IMR-90 (cell line): ENCODE measurements at regions of chr13 and their contacts with region 1.

Region 1: DNA sequence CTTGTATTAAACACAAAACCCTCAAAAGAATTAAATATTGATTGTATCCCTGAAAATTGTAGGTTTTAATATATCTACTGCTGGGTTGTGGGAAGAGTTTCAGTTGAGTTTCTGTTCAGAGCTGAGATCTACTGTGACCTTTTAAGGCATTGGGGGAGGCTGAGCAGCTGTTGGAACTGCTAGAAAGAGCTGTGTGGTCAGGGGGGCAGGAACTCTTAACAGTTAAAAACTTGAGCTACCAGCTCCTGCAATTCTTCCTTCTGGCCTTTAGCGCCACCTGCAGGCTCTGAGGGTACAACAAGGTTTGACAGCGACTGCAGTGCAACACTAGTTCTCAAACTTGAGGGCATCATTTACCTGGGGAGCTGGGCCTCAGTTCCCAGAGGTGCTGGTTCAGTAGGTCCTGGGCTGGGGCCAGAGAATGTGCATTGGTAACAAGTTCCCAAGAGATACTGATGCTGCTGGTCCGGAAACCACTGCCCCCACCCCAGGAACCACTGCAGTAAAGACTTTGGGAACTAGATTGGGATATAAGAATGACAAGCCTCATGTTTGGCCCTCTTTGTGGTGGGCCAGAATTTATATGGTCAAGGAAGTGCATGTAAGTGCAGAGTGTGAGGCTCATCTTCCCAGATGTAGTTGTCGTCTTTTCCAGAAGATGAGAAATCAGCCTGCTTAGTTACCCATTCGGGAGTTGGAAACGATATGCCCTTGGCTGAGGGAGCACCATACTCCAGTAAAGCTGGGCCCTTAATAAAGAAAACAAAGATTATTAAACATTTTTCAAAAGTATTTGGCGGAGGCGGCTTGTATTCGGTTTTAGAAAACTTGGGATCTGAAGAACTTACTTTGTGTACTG is 2.6 kb downstream of the RNASEH2B start:
- DNase-seq: peak; percentile 90
- ATAC-seq: peak; percentile 34
- H3K4me3 ChIP-seq: no peak overlapping the region
- H3K27ac ChIP-seq: no peak overlapping the region
- H3K4me1 ChIP-seq: peaks cover 14% of the 10 kb centered on the region
- H3K27me3 ChIP-seq: no peaks in the 10 kb centered on the region
- CTCF ChIP-seq: peak; percentile 82
- POLR2A ChIP-seq: no peak
- RAD21 ChIP-seq: peak; percentile 81

Region 2: DNA sequence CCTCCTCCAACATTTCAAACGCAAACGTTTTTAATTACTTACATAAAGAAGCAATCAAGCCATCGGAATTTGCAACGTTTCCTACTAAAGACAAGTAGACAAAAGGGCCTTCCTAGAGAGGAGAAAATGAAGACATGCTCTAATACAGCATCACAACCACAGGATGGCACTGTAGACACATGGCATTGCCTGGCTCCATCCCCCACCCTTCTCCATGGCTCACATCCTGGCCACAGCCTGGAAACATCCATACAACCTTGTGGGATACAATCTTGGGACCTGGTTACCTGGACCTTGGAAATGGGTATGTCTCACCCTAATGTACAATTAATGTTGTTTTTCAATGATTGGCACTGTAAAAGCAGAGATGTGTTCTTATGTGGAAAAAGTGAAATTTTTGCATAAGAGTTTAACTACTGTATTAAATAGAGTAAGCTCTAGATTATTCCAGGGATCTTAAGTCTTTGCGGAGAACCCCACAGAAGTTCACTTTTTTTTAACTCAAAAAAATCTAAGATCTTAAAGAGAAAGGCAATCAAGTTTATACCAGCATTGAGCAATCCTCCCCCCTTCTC is 1242.3 kb before region 1 on chr13:
- CTCF ChIA-PET with region 1: no interaction called
- POLR2A ChIA-PET with region 1: no interaction called
- dilution Hi-C with region 1: no loop called
- in situ Hi-C with region 1: loop called (anchors 25 kb)
- intact Hi-C with region 1: loop called (anchors 5 kb)
- DNase-seq: peak; percentile 81
- ATAC-seq: peak; percentile 98
- H3K4me3 ChIP-seq: no peak overlapping the region
- H3K27ac ChIP-seq: no peak overlapping the region
- H3K4me1 ChIP-seq: peaks cover 5% of the 10 kb centered on the region
- H3K27me3 ChIP-seq: no peaks in the 10 kb centered on the region
- CTCF ChIP-seq: peak; percentile 94
- POLR2A ChIP-seq: peak; percentile 61; the same call in 1 of the 2 replicates
- RAD21 ChIP-seq: peak; percentile 98

Region 3: GRCh38 chr13:49936085-49936940 is 975.9 kb before region 1 on chr13 and contains the start of gene SPRYD7:
- CTCF ChIA-PET with region 1: no interaction called
- POLR2A ChIA-PET with region 1: no interaction called
- dilution Hi-C with region 1: no loop called
- in situ Hi-C with region 1: no loop called
- intact Hi-C with region 1: loop called (anchors 10 kb)
- DNase-seq: peak; percentile 97
- ATAC-seq: peak; percentile 100
- H3K4me3 ChIP-seq: peak within 1 kb of the TSS; percentile 74
- H3K27ac ChIP-seq: peak within 1 kb of the TSS; percentile 82
- H3K4me1 ChIP-seq: peaks cover 4% of the 10 kb centered on the region; the same call in 1 of the 2 replicates
- H3K27me3 ChIP-seq: no peaks in the 10 kb centered on the region
- CTCF ChIP-seq: peak; percentile 93
- POLR2A ChIP-seq: peak; percentile 61; the same call in 1 of the 2 replicates
- RAD21 ChIP-seq: peak; percentile 33
- total RNA-seq, gene SPRYD7: 5.6 and 9.7 TPM in 2 replicates

Region 4: GRCh38 chr13:49996951-49997895 is 914.9 kb before region 1 on chr13 and contains the start of gene TRIM13:
- CTCF ChIA-PET with region 1: interaction called, 3 read pairs
- POLR2A ChIA-PET with region 1: no interaction called
- dilution Hi-C with region 1: no loop called
- in situ Hi-C with region 1: loop called (anchors 25 kb)
- intact Hi-C with region 1: loop called (anchors 5 kb)
- DNase-seq: peak; percentile 88
- ATAC-seq: peak; percentile 87
- H3K4me3 ChIP-seq: peak within 1 kb of the TSS; percentile 87
- H3K27ac ChIP-seq: peak within 1 kb of the TSS; percentile 98
- H3K4me1 ChIP-seq: peaks cover 4% of the 10 kb centered on the region
- H3K27me3 ChIP-seq: no peaks in the 10 kb centered on the region
- CTCF ChIP-seq: peak; percentile 82
- POLR2A ChIP-seq: peak; percentile 87
- RAD21 ChIP-seq: peak; percentile 68
- total RNA-seq, gene TRIM13: 20.1 and 22.5 TPM in 2 replicates

Region 5: DNA sequence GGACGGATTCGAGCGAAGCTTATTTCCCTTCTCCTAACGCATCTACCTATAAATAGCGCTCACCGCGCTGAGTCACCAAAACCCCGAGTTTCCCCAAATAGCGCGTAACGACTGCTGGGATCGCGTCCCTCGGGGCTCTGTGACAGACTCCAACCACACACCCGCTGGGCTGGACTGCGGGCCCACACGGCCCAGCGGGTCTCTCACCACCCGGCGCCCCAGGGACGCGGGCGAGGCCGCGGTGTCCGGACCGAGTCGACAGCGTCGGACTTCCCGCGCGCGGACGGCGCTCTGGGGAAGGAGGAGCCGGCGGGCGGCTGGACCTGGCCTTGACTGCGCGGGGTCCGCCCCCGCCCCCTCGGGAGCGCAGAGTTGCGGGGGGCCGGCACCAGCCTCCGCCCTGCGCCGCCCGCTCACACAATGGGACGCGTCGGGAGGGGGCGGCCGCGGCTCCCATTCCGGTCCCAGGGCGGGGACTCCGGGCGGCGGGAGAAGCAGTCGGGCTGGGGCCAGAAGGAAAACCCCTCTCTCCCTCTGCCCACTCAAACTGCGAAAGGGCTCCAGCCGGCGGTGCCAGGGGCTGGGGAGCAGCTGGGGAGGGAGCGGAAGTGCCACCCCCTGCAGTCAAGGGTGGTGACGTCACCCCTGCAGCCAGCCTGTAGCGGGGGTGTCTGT is 788.2 kb before region 1 on chr13:
- CTCF ChIA-PET with region 1: no interaction called
- POLR2A ChIA-PET with region 1: no interaction called
- dilution Hi-C with region 1: no loop called
- in situ Hi-C with region 1: no loop called
- intact Hi-C with region 1: loop called (anchors 10 kb)
- DNase-seq: peak; percentile 97
- ATAC-seq: peak; percentile 72
- H3K4me3 ChIP-seq: peak overlapping the region; percentile 76
- H3K27ac ChIP-seq: peak overlapping the region; percentile 95
- H3K4me1 ChIP-seq: peaks cover 7% of the 10 kb centered on the region
- H3K27me3 ChIP-seq: no peaks in the 10 kb centered on the region
- CTCF ChIP-seq: 0 out of 2 replicates have a peak, but pooled peaks have one; percentile 13
- POLR2A ChIP-seq: peak; percentile 94
- RAD21 ChIP-seq: no peak; the same call in 1 of the 2 replicates

Region 6: DNA sequence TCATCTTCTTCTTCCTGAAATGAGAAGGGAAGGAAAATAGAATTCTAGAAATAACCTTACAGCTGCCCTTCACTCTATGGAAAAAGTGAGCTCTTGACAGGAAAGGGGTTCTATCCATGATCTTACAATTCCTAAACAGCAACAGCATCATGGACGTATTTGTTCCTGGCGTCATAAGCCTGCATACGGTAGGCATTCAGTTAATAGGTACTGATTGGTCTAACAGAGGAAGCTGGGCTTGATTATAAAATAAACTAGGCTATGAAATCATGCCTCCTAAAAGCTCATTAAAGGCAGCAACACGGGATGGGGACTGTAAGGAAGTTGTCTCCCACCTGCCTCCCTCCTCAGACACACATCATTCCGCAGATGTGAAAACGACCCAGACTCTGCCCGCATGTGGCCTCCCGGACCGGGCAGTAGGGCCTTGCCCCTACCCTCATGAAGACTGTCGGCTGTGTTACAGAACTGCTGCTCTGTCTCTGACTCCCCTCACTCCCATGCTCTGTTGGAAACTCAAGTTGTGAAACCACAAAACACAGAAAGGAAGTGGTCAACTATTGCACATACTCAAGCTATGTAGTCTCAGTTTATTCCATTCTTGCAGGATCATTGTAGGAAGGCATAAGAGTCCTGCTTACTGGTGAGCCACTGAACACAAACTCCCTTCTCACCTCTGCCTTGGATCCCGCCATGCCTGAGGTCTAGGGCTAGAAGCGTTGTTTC is 198.5 kb before region 1 on chr13:
- CTCF ChIA-PET with region 1: no interaction called
- POLR2A ChIA-PET with region 1: no interaction called
- dilution Hi-C with region 1: no loop called
- in situ Hi-C with region 1: no loop called
- intact Hi-C with region 1: no loop called
- DNase-seq: peak; percentile 59
- ATAC-seq: 0 out of 2 replicates have a peak, but pooled peaks have one; percentile 11
- H3K4me3 ChIP-seq: no peak overlapping the region
- H3K27ac ChIP-seq: no peak overlapping the region
- H3K4me1 ChIP-seq: no peaks in the 10 kb centered on the region; the same call in 1 of the 2 replicates
- H3K27me3 ChIP-seq: peaks cover 8% of the 10 kb centered on the region
- CTCF ChIP-seq: no peak
- POLR2A ChIP-seq: no peak
- RAD21 ChIP-seq: no peak

Region 7: DNA sequence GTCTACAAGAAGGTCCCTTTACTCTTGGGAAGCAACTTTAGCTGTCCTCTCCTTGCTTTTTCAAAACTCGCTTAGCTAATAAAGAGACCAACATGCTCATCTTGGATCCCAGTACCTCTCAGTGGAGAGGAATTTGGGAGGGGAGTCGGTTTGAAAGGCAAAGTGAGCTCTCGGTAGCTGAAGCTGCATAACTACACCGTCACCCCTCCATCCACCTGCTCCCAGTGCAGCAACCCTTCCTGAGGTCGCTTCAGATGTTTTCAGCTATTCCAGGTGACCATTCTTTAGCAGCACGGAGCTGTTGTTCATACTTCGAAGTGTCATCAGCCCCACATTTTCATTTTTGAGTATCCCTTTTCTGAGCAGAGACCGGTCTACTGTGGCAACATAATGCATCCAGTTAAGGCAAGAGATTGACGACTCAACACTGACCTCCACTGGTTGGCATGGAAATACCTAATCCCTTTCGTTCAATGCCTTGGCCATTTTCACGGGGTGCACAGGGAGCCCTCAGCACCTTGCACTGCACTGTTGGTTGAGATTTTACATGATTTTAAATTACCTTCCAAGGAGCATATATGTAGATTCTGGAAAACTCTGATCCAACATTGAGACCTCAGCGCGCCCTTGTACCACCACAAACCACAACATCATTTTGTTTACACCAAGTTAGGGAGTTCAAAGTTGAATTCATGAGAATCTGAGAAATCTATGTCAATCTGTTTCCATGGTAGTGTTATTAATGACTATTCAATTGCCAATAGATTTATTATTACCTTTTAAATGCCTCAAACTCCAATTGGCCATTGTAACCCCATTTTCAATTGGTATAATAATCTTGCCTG is 110.9 kb before region 1 on chr13:
- CTCF ChIA-PET with region 1: interaction called, 3 read pairs
- POLR2A ChIA-PET with region 1: no interaction called
- dilution Hi-C with region 1: no loop called
- in situ Hi-C with region 1: no loop called
- intact Hi-C with region 1: loop called (anchors 2 kb)
- DNase-seq: peak; percentile 72
- ATAC-seq: peak; percentile 97
- H3K4me3 ChIP-seq: no peak overlapping the region
- H3K27ac ChIP-seq: no peak overlapping the region
- H3K4me1 ChIP-seq: peaks cover 1% of the 10 kb centered on the region; the same call in 1 of the 2 replicates
- H3K27me3 ChIP-seq: peaks cover 18% of the 10 kb centered on the region
- CTCF ChIP-seq: peak; percentile 82
- POLR2A ChIP-seq: no peak
- RAD21 ChIP-seq: peak; percentile 90

Region 8: GRCh38 chr13:51070005-51070649 is 158.0 kb after region 1 on chr13:
- CTCF ChIA-PET with region 1: no interaction called
- POLR2A ChIA-PET with region 1: no interaction called
- dilution Hi-C with region 1: no loop called
- in situ Hi-C with region 1: no loop called
- intact Hi-C with region 1: loop called (anchors 2 kb)
- DNase-seq: peak; percentile 72
- ATAC-seq: peak; percentile 95
- H3K4me3 ChIP-seq: no peak overlapping the region
- H3K27ac ChIP-seq: no peak overlapping the region
- H3K4me1 ChIP-seq: peaks cover 1% of the 10 kb centered on the region; the same call in 1 of the 2 replicates
- H3K27me3 ChIP-seq: peaks cover 27% of the 10 kb centered on the region
- CTCF ChIP-seq: peak; percentile 93
- POLR2A ChIP-seq: peak; percentile 54; the same call in 1 of the 2 replicates
- RAD21 ChIP-seq: peak; percentile 98

Region 9: GRCh38 chr13:51202477-51203046 is 290.4 kb after region 1 on chr13:
- CTCF ChIA-PET with region 1: no interaction called
- POLR2A ChIA-PET with region 1: no interaction called
- dilution Hi-C with region 1: no loop called
- in situ Hi-C with region 1: no loop called
- intact Hi-C with region 1: no loop called
- DNase-seq: no peak
- ATAC-seq: no peak
- H3K4me3 ChIP-seq: no peak overlapping the region
- H3K27ac ChIP-seq: no peak overlapping the region
- H3K4me1 ChIP-seq: no peaks in the 10 kb centered on the region
- H3K27me3 ChIP-seq: peaks cover 4% of the 10 kb centered on the region
- CTCF ChIP-seq: no peak
- POLR2A ChIP-seq: no peak
- RAD21 ChIP-seq: no peak

Region 10: GRCh38 chr13:51467730-51468129 is 555.6 kb after region 1 on chr13:
- CTCF ChIA-PET with region 1: no interaction called
- POLR2A ChIA-PET with region 1: no interaction called
- dilution Hi-C with region 1: no loop called
- in situ Hi-C with region 1: no loop called
- intact Hi-C with region 1: no loop called
- DNase-seq: no peak
- ATAC-seq: no peak
- H3K4me3 ChIP-seq: no peak overlapping the region
- H3K27ac ChIP-seq: no peak overlapping the region
- H3K4me1 ChIP-seq: no peaks in the 10 kb centered on the region
- H3K27me3 ChIP-seq: no peaks in the 10 kb centered on the region
- CTCF ChIP-seq: no peak
- POLR2A ChIP-seq: no peak
- RAD21 ChIP-seq: no peak